CD8-positive, alpha-beta memory T cell (primary cell): ENCODE measurements at regions of chr2 and their contacts with region 1.

Region 1: GRCh38 chr2:113203901-113204519 is 30.2 kb downstream of the PSD4 start:
- DNase-seq: peak; percentile 52 to 80 (median 67)
- H3K4me3 ChIP-seq: no peak overlapping the region
- H3K4me3 Mint-ChIP-seq: peak overlapping the region in 4 of 7 donors; percentile 20 to 54 (median 34)
- H3K27ac ChIP-seq: no peak overlapping the region
- H3K27ac Mint-ChIP-seq: peak overlapping the region; percentile 45 to 92 (median 86)
- H3K4me1 ChIP-seq: peaks cover 8% of the 10 kb centered on the region
- H3K4me1 Mint-ChIP-seq: peaks cover 16 to 33% (median 19%) of the 10 kb centered on the region in 3 donors
- H3K27me3 ChIP-seq: no peaks in the 10 kb centered on the region
- H3K27me3 Mint-ChIP-seq: no peaks in the 10 kb centered on the region

Region 2: GRCh38 chr2:113173542-113174395 is 30.2 kb before region 1 on chr2 and contains the start of gene PSD4:
- CTCF ChIA-PET with region 1: interaction called, 135 read pairs
- POLR2A ChIA-PET with region 1: interaction called, 15 read pairs
- DNase-seq: peak; percentile 77 to 94 (median 91)
- H3K4me3 ChIP-seq: peak within 1 kb of the TSS; percentile 88
- H3K4me3 Mint-ChIP-seq: peak within 1 kb of the TSS; percentile 89 to 95 (median 93)
- H3K27ac ChIP-seq: peak within 1 kb of the TSS; percentile 77
- H3K27ac Mint-ChIP-seq: peak within 1 kb of the TSS; percentile 86 to 98 (median 94)
- H3K4me1 ChIP-seq: peaks cover 76% of the 10 kb centered on the region
- H3K4me1 Mint-ChIP-seq: peaks cover 70 to 87% (median 76%) of the 10 kb centered on the region in 3 donors
- H3K27me3 ChIP-seq: no peaks in the 10 kb centered on the region
- H3K27me3 Mint-ChIP-seq: peaks cover 0 to 3% of the 10 kb centered on the region in 2 donors
- total RNA-seq, gene PSD4: 192 to 193 TPM

Region 3: DNA sequence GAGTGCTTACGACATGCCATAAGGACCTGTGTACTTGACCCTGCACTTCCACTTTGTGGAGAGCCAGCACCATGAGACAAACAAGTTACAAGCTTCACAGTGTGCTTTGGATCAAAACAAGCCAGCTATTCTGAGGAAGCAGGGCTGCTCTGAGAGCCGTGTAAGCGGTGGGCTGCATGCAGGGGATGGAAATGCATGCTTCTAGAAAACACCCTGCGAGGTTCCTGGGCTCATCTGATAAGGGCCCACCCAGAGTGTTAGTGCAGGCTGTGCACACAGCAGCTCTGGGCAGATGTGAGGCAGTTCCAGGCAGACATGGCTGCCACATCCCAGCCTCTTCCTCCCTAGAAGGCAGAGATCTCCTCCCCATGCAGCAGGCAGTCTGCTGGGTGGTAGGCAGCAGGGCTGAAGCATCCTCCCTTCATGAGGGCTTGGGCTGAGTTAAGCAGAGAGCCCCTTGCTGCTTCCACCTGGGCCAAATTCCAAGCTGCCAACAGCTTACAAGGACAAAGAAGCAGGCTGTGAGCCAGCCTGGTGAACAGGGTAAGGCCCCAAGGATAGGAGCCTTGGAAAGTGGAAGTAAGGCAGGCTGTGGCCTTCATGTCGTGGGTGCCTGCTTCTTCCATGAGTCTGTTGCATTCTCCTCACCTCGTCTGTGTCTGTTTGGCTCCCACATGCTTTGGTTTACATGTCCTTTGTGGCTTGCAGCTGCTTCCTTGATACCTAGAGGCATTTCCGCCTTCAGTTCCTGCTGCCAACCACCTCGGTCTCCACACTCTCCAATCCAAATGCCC is 22.6 kb before region 1 on chr2:
- CTCF ChIA-PET with region 1: interaction called, 135 read pairs
- POLR2A ChIA-PET with region 1: no interaction called
- DNase-seq: peak in 1 of 5 donors; percentile 33
- H3K4me3 ChIP-seq: peak overlapping the region; percentile 48
- H3K4me3 Mint-ChIP-seq: peak overlapping the region; percentile 4 to 95 (median 80)
- H3K27ac ChIP-seq: no peak overlapping the region
- H3K27ac Mint-ChIP-seq: peak overlapping the region; percentile 74 to 94 (median 93)
- H3K4me1 ChIP-seq: peaks cover 98% of the 10 kb centered on the region
- H3K4me1 Mint-ChIP-seq: peaks cover 87 to 97% (median 97%) of the 10 kb centered on the region in 3 donors
- H3K27me3 ChIP-seq: no peaks in the 10 kb centered on the region
- H3K27me3 Mint-ChIP-seq: no peaks in the 10 kb centered on the region

Region 4: GRCh38 chr2:113233593-113234550 is 29.9 kb after region 1 on chr2:
- CTCF ChIA-PET with region 1: interaction called, 20 read pairs
- POLR2A ChIA-PET with region 1: interaction called, 3 read pairs
- DNase-seq: no peak
- H3K4me3 ChIP-seq: no peak overlapping the region
- H3K4me3 Mint-ChIP-seq: peak overlapping the region in 1 of 7 donors; percentile 9
- H3K27ac ChIP-seq: no peak overlapping the region
- H3K27ac Mint-ChIP-seq: peak overlapping the region in 1 of 8 donors; percentile 4
- H3K4me1 ChIP-seq: no peaks in the 10 kb centered on the region
- H3K4me1 Mint-ChIP-seq: peaks cover 0 to 36% (median 14%) of the 10 kb centered on the region in 3 donors
- H3K27me3 ChIP-seq: no peaks in the 10 kb centered on the region
- H3K27me3 Mint-ChIP-seq: no peaks in the 10 kb centered on the region

Region 5: DNA sequence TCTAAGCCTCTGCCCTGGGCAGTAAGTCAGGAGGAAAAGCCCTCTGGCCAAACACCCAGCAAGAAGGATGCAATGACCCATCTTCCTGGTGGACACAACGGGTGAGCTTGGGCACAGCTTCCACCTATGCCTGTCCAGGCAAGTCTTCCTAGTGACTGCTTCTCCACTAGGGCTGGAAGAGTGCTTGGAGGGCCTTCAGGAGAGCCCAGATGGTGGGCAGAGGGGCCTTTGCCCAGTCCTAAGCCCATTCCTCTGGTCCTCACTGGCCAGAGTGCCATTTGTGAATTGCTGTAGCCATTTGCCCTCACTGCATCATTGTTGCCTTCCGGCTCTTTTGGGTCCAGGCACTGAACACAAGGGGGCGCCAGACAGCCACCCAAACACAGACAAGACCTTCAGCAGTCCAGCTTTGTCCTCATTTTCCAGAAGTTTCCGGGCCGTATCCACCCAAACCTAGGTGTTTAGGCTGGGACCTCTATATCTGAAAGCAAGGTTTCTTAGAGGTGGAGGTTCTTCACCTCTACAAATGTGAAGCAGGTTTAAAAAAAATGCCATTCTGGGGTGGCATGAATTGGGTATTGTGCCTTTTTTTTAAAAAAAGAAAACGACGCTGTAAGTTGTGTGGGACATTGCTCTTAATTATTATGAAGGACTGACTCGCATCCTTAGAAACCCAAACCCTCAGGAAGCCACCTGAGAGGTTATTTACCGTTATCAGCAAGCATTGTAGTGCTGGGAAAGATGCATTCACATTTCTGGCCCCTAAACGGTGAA is 45.2 kb after region 1 on chr2:
- CTCF ChIA-PET with region 1: interaction called, 21 read pairs
- POLR2A ChIA-PET with region 1: no interaction called
- DNase-seq: peak; percentile 66 to 81 (median 67)
- H3K4me3 ChIP-seq: no peak overlapping the region
- H3K4me3 Mint-ChIP-seq: no peak overlapping the region
- H3K27ac ChIP-seq: no peak overlapping the region
- H3K27ac Mint-ChIP-seq: peak overlapping the region in 7 of 8 donors; percentile 42 to 95 (median 74)
- H3K4me1 ChIP-seq: peaks cover 50% of the 10 kb centered on the region
- H3K4me1 Mint-ChIP-seq: peaks cover 49 to 54% (median 52%) of the 10 kb centered on the region in 3 donors
- H3K27me3 ChIP-seq: no peaks in the 10 kb centered on the region
- H3K27me3 Mint-ChIP-seq: no peaks in the 10 kb centered on the region

Region 6: GRCh38 chr2:113370478-113371091 is 166.6 kb after region 1 on chr2:
- CTCF ChIA-PET with region 1: interaction called, 47 read pairs
- POLR2A ChIA-PET with region 1: no interaction called
- DNase-seq: peak; percentile 14 to 75 (median 56)
- H3K4me3 ChIP-seq: no peak overlapping the region
- H3K4me3 Mint-ChIP-seq: no peak overlapping the region
- H3K27ac ChIP-seq: no peak overlapping the region
- H3K27ac Mint-ChIP-seq: peak overlapping the region in 2 of 8 donors; percentile 22 to 47
- H3K4me1 ChIP-seq: peaks cover 3% of the 10 kb centered on the region
- H3K4me1 Mint-ChIP-seq: peaks cover 4 to 5% (median 4%) of the 10 kb centered on the region in 3 donors
- H3K27me3 ChIP-seq: no peaks in the 10 kb centered on the region
- H3K27me3 Mint-ChIP-seq: peaks cover 0 to 9% of the 10 kb centered on the region in 2 donors

Region 7: DNA sequence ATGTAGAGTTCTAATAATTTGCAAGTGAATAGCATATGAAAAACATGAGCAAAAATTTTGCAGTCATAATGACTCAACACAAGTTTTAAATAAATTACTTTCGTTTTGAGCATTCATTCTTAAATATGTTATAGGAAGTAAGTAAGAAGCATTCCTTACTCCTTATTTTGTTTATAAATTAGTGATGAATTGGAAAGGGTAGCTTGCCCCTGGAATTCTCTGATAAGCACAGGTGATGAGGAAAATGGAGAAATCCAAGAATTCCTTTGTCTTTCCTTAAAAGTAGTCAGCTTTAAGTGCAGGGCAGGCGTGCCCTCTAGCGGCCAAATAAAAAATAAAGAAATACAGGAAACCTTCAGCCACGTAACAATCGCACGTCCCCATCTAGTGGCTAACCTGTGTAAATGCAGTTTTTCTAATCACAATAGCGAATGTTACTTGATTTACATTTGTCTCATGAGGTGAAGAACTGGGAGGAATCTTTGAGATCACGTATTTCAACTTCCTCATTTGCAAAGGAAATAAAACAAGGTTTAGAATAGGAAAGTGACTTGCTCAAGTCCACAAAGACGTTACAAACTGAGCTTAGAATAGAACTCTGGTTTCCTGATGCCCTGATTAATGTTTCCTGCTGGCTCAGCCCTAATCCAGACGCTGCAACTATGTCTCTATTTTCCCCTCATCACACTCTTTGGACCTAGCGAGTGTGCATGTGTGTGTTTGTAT is 186.3 kb after region 1 on chr2:
- CTCF ChIA-PET with region 1: interaction called, 36 read pairs
- POLR2A ChIA-PET with region 1: no interaction called
- DNase-seq: peak; percentile 11 to 81 (median 72)
- H3K4me3 ChIP-seq: peak overlapping the region; percentile 51
- H3K4me3 Mint-ChIP-seq: peak overlapping the region; percentile 63 to 85 (median 73)
- H3K27ac ChIP-seq: no peak overlapping the region
- H3K27ac Mint-ChIP-seq: peak overlapping the region in 7 of 8 donors; percentile 14 to 75 (median 52)
- H3K4me1 ChIP-seq: peaks cover 4% of the 10 kb centered on the region
- H3K4me1 Mint-ChIP-seq: peaks cover 11 to 16% (median 11%) of the 10 kb centered on the region in 3 donors
- H3K27me3 ChIP-seq: no peaks in the 10 kb centered on the region
- H3K27me3 Mint-ChIP-seq: peaks cover 0 to 18% of the 10 kb centered on the region in 2 donors